ENCODE measurements at regions of chr4 and their contacts with region 1.

Region 1: DNA sequence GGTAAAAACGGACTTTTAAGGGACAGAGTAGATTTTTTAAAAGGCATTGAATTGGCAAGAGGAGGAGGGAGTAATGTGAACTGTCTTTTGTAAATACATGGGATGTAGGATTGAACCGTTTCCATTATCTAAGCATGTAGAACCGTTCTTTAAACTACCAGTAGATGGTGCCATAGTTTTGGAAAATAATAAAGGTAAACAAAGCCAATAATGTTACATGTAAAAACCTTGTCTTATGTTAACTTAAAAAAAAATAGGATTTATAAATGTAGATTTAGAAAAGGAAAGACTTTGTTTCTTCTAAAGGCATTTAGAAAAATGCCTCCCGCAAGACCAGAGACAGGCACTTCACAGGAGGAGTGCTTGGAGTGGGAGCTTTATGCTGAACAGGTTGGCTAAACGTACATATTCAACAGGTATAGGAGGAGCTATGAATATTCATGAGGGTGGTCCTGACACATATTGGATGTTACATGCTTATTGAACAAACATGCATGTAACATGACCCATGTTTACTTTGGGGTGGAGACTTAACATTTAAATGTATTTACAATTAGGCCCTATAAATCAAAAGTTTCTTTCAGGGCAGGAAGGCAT is 45.5 kb upstream of the FAM241A start:
- DNase-seq: peak; percentile 37
- H3K4me3 ChIP-seq: no peak overlapping the region
- H3K27ac ChIP-seq: no peak overlapping the region
- H3K4me1 ChIP-seq: no peaks in the 10 kb centered on the region
- H3K27me3 ChIP-seq: no peaks in the 10 kb centered on the region
- CTCF ChIP-seq: peak; percentile 55 to 56

Region 2: GRCh38 chr4:112038861-112039260 is 60.9 kb before region 1 on chr4:
- CTCF ChIA-PET with region 1: no interaction called
- dilution Hi-C with region 1: no loop called
- in situ Hi-C with region 1: no loop called
- intact Hi-C with region 1: no loop called
- DNase-seq: peak; percentile 58
- H3K4me3 ChIP-seq: no peak overlapping the region
- H3K27ac ChIP-seq: no peak overlapping the region
- H3K4me1 ChIP-seq: no peaks in the 10 kb centered on the region
- H3K27me3 ChIP-seq: peaks cover 3% of the 10 kb centered on the region
- CTCF ChIP-seq: no peak

Region 3: DNA sequence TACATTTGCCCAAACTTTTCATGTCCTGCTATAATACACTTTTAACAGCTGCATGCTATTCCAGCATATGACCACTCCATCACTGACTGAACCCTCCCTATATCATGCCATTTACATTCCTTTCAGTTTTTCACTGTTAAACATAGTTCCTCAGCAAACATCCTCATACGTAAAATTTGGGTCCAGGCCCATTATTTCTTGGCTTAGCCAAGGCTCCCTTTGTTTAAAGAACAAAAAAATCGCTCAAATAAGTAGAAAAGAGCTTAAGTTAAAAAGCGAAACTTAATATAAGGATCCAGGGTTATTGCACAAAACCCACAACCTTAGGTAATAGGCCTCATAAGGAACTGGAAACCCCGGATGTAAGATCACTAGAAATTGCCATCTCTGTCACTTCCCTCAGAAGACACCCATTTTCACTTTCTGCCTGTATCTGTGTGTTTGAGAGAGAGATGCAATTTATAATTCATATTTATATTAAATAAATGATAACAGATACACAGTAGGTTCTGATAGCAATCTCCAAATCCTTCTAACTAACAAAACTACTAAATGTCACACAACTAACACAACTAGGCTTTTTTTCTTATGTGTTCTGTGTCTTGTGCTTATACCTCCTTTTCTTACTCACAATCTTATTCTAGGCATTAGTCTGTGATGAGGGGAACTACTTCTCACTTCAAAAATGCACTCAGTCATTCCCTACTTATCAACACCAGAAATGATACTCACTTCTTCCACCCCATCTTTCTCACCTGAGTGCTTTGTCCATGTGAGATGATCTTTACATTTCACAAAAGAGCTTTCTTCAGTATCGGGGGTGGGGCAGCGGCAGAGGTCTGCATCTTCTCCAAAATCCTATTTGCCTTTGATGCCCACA is 14.4 kb before region 1 on chr4:
- CTCF ChIA-PET with region 1: no interaction called
- dilution Hi-C with region 1: no loop called
- in situ Hi-C with region 1: no loop called
- intact Hi-C with region 1: no loop called
- DNase-seq: no peak
- H3K4me3 ChIP-seq: no peak overlapping the region
- H3K27ac ChIP-seq: no peak overlapping the region
- H3K4me1 ChIP-seq: peaks cover 27% of the 10 kb centered on the region
- H3K27me3 ChIP-seq: no peaks in the 10 kb centered on the region
- CTCF ChIP-seq: no peak

Region 4: DNA sequence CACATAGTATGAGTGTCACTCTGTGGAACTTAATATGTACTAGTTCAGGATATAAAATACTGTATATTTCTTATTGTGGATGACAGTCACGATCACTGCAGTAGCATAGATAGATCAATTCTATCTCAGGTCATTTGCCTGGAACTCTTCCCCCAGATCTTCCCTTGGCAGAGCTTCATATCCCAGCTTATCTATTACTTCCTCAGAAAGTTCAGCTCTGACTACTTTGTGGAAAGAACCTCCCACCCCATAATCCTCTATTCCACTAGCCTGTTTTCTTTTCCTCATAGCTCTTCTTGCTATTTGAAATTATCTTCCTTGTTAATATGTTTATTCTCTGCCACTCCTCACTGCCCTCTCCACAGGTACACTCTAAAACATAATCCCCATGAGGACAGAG is 56.3 kb after region 1 on chr4:
- CTCF ChIA-PET with region 1: no interaction called
- dilution Hi-C with region 1: no loop called
- in situ Hi-C with region 1: no loop called
- intact Hi-C with region 1: no loop called
- DNase-seq: no peak
- H3K4me3 ChIP-seq: no peak overlapping the region
- H3K27ac ChIP-seq: no peak overlapping the region
- H3K4me1 ChIP-seq: no peaks in the 10 kb centered on the region
- H3K27me3 ChIP-seq: no peaks in the 10 kb centered on the region
- CTCF ChIP-seq: no peak

Region 5: GRCh38 chr4:112327965-112328733 is 228.3 kb after region 1 on chr4:
- CTCF ChIA-PET with region 1: no interaction called
- dilution Hi-C with region 1: no loop called
- in situ Hi-C with region 1: no loop called
- intact Hi-C with region 1: loop called (anchors 10 kb)
- DNase-seq: peak; percentile 45
- H3K4me3 ChIP-seq: no peak overlapping the region
- H3K27ac ChIP-seq: no peak overlapping the region
- H3K4me1 ChIP-seq: no peaks in the 10 kb centered on the region
- H3K27me3 ChIP-seq: no peaks in the 10 kb centered on the region
- CTCF ChIP-seq: peak; percentile 45 to 54

Measured in mammary epithelial cell (primary cell).